ENCODE measurements at regions of chr2 and their contacts with region 1.

Region 1: DNA sequence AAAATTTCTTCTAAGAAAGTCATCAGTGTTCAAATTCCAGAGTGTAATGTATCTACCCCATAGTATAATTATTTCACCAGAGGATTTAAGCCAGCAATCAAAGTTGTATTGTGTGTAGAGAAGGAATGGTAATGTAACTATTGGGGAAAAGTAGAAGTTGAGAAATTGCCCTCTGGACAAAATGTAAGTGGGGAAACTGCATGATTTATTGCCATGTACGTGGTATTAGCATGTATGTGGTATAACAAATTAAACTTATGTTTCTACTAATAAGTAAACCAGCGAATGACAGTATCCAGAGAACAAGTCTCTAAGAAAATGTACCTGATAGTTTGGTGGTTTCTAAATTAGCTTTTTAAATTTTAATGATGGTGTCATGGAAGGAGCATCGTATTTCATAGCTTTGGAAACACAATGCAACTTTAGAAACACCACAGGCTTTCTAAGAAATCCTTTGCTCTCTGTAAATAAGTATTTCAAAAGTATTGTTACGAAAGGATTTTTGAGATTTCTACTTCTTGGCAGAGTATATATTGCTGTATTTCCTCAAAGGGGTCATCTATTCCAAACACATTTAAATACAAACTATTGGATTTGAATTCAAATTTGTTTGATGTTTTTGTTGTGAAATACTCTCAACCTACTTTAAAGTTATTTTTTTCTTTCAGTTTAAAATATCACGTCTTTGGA is 1018.9 kb upstream of the ZEB2 start:
- DNase-seq: no peak
- H3K4me3 ChIP-seq: no peak overlapping the region
- H3K27ac ChIP-seq: no peak overlapping the region
- H3K4me1 ChIP-seq: no peaks in the 10 kb centered on the region
- H3K27me3 ChIP-seq: no peaks in the 10 kb centered on the region
- CTCF ChIP-seq: no peak
- EP300 ChIP-seq: no peak
- POLR2A ChIP-seq: no peak

Region 2: DNA sequence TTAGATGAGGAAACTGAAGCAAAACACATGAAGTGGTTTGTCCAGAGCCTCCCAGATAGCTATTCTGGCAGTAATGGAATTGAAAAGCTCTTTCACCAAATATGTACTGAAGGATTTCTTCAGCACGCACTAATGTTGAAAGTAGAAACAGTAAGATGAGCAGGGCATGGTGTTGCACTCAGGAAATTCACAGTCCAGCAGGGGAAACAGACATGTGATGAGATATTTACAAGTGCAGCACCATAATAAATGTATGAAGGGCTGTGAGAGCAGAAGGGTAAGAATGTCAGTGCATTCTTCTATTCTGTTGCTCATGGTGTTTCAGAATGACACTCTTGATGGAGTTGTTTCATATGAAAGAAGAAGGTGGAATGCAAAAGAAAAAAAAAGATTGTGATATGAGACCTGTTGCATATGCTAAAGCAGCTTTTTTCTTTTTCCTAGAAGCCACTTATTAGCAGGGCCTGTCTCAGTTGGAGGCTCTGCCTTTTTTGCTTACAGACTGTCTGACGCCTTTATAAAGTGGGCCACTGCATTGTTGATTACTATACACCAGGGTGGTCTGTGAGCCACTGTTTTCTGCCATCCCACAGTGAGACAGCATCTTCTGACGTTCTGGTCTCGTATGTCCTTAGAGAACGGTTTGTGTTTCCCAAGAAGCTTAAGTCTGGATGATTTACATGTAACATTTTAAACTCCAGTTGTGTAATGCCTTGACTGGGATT is 1892.7 kb before region 1 on chr2:
- in situ Hi-C with region 1: no loop called
- intact Hi-C with region 1: loop called (anchors 5 kb)
- DNase-seq: no peak
- H3K4me3 ChIP-seq: no peak overlapping the region
- H3K27ac ChIP-seq: no peak overlapping the region
- H3K4me1 ChIP-seq: no peaks in the 10 kb centered on the region
- H3K27me3 ChIP-seq: no peaks in the 10 kb centered on the region
- CTCF ChIP-seq: no peak
- EP300 ChIP-seq: no peak
- POLR2A ChIP-seq: no peak

Region 3: DNA sequence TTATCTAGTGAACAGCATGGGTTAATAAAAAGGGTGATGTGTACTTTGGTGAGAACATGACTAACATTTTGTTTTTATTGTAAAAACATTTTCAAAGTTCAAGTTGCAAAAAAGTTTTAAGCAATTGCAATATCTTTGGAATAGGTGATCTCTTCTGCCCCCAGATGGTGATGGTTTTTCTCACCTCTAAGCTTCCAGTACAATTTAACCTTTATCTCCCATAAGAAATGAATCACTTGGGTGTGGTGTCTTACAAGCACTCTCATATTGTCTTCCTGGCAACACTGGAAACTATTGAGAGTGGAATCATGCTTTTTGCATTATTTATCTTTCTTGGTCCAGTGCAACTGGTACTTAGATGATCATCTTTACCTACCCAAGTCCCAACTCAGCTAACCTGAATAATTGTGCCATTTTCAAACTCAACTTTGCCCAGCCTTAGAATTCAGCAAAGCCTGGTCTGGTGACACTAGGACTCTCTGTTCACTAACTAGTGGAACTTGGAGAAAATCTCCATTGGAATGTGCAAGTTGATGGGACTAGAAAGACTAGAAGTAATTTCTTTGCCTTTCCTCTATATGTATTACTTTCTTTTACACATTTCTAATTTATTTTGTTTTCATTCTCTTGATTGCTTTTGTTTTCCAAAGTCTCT is 54.2 kb before region 1 on chr2:
- in situ Hi-C with region 1: no loop called
- intact Hi-C with region 1: no loop called
- DNase-seq: no peak
- H3K4me3 ChIP-seq: no peak overlapping the region
- H3K27ac ChIP-seq: no peak overlapping the region
- H3K4me1 ChIP-seq: no peaks in the 10 kb centered on the region
- H3K27me3 ChIP-seq: no peaks in the 10 kb centered on the region
- CTCF ChIP-seq: no peak
- EP300 ChIP-seq: no peak
- POLR2A ChIP-seq: no peak

Region 4: DNA sequence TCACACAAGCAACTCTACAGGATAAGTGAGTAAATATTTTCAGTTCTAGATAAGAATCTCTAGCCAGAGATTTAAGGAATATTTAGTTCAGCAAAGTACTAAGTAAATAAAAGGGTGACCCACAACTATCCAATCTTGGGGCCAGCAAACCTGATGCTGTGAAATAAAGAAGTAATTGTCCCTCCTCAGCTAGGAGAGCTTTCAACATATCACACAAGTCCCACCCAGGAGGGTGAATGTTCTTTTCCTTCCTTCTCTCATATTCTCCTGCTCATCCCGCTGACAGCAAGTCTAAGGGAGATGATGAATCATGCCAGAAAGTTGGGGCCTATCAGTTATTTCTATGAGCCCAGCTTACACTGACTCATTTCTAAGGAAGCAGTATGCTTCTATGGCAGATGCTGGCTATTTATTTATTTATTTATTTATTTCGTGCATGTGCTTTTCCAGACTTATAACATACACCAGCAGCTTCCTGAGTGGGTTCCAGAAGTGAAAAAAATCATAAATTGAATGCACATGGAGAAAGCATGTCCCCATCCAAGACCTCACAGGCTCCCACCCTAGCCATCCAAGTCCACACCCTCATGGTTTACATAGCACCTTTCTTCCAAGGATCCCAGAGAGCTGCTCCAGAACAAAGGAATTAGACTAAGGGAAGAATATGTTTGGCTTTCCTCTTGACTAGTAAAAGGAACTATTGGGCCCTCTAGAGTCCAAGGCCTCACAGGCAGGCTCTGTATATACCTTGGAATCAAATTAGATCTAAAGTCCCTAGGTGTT is 55.2 kb after region 1 on chr2:
- in situ Hi-C with region 1: no loop called
- intact Hi-C with region 1: no loop called
- DNase-seq: no peak
- H3K4me3 ChIP-seq: no peak overlapping the region
- H3K27ac ChIP-seq: no peak overlapping the region
- H3K4me1 ChIP-seq: no peaks in the 10 kb centered on the region
- H3K27me3 ChIP-seq: no peaks in the 10 kb centered on the region
- CTCF ChIP-seq: no peak
- EP300 ChIP-seq: no peak
- POLR2A ChIP-seq: no peak

Measured in transverse colon (tissue), 4 donors.